Calu3 (cell line): ENCODE measurements at regions of chr16 and their contacts with region 1.

Region 1: DNA sequence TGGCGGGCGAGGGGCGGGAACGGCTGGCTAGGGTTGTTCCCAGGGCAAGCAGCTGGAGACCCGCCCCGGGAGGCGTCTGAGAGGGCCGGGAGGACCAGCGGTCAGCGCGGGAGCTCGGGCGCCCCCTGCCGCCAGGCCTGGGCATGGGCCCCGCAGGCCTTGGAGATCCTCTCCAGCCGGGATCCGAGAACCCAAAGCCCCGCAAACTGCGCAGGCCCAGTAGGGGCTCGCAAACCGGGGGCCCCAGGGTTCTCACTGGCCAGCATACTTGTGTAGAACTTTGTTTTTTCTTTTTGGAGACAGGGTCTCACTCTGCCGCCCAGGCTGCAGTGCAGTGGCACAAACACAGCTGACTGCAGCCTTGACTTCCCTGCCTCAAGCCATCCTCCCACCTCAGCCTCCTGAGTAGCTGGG is 20.8 kb upstream of the ZNF423 start:
- DNase-seq: peak; percentile 66
- H3K4me3 Mint-ChIP-seq: no peak overlapping the region
- H3K27ac Mint-ChIP-seq: no peak overlapping the region
- H3K4me1 Mint-ChIP-seq: no peaks in the 10 kb centered on the region
- H3K27me3 Mint-ChIP-seq: peaks cover 100% of the 10 kb centered on the region
- CTCF ChIP-seq: peak; percentile 72

Region 2: GRCh38 chr16:49674351-49674851 is 202.3 kb before region 1 on chr16:
- CTCF ChIA-PET with region 1: no interaction called
- intact Hi-C with region 1: no loop called
- DNase-seq: no peak
- H3K4me3 Mint-ChIP-seq: no peak overlapping the region
- H3K27ac Mint-ChIP-seq: no peak overlapping the region
- H3K4me1 Mint-ChIP-seq: no peaks in the 10 kb centered on the region
- H3K27me3 Mint-ChIP-seq: peaks cover 80% of the 10 kb centered on the region
- CTCF ChIP-seq: no peak

Region 3: GRCh38 chr16:49788572-49788971 is 88.2 kb before region 1 on chr16:
- CTCF ChIA-PET with region 1: no interaction called
- intact Hi-C with region 1: no loop called
- DNase-seq: no peak
- H3K4me3 Mint-ChIP-seq: no peak overlapping the region
- H3K27ac Mint-ChIP-seq: no peak overlapping the region
- H3K4me1 Mint-ChIP-seq: no peaks in the 10 kb centered on the region
- H3K27me3 Mint-ChIP-seq: peaks cover 92% of the 10 kb centered on the region
- CTCF ChIP-seq: no peak

Region 4: DNA sequence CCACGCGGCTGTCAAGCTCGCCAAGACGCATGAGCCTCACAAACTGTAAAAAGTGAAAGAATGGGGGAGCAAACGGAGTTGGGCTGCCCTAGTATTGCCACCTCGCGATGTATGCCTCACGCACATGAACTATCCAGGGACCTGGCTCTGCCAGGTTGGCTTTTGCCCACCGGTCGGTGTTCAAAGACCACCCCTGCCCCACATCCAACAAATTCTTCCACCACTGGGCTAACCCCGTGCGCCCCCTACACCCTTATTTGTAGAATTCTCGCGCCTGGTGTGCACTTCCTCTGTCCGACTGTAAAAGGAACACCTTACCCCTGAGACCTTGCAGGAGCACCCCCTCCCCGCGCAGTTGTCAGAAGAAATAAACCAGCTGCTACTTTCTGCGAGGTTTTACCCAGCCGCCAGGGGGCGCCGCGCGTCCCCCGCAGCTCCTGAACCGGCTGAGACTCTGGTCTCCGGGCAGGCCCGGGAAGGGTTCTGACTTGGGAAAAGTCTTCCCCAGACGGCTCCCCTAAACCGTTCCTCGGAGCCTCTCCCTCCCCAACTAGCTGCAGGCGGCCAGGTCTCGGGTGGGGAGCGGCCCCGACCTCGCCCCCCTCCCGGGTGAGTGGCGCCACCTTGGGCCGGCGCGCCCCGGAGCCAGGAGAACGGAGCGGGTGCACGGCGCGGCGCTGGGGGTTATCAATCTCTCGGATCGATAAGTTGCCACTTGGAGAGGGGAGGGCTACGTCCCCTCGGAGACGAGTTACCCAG is 19.1 kb before region 1 on chr16:
- CTCF ChIA-PET with region 1: interaction called, 10 read pairs
- intact Hi-C with region 1: no loop called
- DNase-seq: peak; percentile 77
- H3K4me3 Mint-ChIP-seq: peak overlapping the region; percentile 72
- H3K27ac Mint-ChIP-seq: no peak overlapping the region
- H3K4me1 Mint-ChIP-seq: peaks cover 8% of the 10 kb centered on the region
- H3K27me3 Mint-ChIP-seq: peaks cover 94% of the 10 kb centered on the region
- CTCF ChIP-seq: peak; percentile 97

Region 5: DNA sequence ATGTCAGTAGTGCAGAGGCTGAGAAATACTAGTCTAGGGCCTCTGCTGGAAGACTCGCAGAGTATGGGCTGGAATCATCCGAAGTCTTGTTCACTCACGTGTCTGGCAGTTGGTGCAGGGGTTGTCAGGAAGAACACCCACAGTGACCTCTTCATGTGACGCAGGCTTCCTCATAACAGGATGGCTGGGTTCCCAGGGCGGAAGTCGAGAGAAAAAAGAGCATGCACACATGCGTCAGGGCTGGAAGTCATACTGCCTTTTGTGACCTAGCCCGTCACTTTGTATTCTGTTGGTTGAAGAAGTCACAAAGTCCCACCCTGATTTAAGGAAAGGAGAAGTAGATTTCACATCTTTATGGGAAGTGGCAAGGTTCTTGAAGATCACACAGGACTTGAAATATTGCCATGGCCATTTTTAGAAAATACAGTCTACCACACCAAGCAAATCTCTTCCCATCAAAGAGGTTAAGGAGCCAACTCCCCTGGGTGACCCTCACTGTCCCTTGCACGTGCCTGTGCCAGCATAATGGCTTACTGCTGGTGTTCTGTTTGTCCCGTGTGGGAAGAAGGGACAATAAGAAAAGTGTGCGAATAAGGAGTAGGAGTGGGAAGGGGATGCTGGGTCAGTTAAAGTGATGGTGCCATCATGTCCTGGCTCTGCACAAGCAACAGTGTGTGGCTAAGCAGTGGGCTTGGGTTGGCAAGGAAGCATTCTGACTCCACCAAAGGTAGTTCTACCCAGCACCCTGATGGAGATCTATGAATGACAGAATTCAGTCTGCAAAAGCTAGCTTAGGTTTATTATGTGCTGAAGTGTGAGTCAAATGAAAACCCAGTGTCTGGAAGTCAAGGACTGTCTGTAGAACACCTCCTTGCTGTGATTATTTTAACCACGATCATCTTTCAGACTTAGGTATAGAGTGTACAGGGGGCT is 217.2 kb after region 1 on chr16:
- CTCF ChIA-PET with region 1: no interaction called
- intact Hi-C with region 1: no loop called
- DNase-seq: no peak
- H3K4me3 Mint-ChIP-seq: no peak overlapping the region
- H3K27ac Mint-ChIP-seq: no peak overlapping the region
- H3K4me1 Mint-ChIP-seq: no peaks in the 10 kb centered on the region
- H3K27me3 Mint-ChIP-seq: no peaks in the 10 kb centered on the region
- CTCF ChIP-seq: no peak